ENCODE measurements at regions of chr3 and their contacts with region 1.

Region 1: GRCh38 chr3:87167628-87168456 is 59.3 kb upstream of the CHMP2B start:
- DNase-seq: peak in 2 of 10 donors; percentile 11 to 30

Region 2: DNA sequence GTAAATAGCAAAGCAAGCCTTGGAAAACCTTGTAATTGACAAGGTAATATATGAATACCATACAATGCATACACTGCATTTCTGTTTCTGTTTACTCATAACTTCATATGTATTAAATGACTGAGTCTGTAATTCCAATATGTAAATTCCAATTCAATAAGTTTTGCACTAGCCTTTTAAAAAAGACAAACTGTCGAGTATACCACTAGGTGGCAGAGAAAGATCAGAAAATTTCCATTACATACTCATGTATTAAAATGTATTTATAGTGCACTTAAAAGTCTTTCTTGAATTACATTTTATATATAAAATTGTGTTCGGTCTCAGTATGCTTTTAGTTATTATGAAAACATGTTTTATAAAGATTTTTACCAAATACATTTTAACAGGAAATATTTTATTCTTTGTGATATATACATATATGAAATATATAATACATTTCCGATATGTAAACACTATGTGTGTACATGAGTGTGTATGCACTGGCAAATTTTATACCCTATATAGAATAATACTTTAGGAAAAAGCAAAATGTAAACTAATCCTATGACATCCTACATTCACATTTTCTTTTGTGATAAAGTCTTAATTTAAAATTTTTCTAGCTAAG is 393.7 kb before region 1 on chr3:
- intact Hi-C with region 1: loop called (anchors 2 kb)
- DNase-seq: no peak

Region 3: DNA sequence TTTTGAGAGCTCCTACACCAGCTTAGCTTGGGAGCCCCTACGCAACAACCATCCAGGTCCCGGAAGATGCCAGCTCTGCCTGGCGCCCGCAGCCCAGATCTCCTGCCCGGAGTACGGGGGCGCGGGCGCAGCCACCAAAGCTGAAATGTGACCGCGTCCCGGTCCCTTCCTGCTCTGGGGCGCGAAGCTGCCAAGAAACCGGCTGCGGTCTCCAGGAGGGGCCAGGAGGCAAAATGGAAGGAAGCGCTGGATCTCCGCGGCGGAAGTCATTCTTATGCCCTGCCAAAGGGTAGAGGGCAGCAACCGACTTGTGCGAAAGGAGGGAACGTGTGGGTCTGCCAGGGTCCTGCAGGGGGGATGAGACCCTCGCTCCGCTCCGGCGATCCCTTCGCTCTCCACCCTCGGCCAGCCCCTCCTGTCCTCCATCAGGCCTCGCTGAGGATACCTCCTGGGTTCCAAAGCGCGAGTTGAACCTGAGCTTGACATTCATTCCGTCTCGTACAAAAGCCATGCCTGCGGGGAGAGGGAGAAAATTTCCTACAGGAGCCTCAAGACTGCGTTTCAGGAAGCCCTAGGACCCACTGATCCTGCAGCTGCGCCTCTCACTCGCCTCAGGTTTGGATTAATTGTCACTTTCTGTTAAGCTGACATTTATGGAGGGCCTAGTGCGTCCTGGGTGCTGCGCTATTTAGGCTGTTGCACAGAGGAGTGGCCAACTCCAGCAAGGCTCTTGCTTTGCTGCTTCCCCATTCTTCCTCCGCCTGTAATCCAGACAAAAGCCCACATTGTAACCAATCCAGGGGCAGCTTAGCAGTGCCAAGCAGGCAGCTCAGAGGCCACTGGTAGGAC is 78.6 kb before region 1 on chr3:
- intact Hi-C with region 1: loop called (anchors 5 kb)
- DNase-seq: peak; percentile 45 to 95 (median 69)

Region 4: GRCh38 chr3:87260270-87260669 is 92.4 kb after region 1 on chr3:
- intact Hi-C with region 1: no loop called
- DNase-seq: peak in 4 of 10 donors; percentile 27 to 38 (median 32)

Measured in posterior cingulate gyrus (tissue), 11 donors.